ENCODE measurements at regions of chr11 and their contacts with region 1.

Region 1: DNA sequence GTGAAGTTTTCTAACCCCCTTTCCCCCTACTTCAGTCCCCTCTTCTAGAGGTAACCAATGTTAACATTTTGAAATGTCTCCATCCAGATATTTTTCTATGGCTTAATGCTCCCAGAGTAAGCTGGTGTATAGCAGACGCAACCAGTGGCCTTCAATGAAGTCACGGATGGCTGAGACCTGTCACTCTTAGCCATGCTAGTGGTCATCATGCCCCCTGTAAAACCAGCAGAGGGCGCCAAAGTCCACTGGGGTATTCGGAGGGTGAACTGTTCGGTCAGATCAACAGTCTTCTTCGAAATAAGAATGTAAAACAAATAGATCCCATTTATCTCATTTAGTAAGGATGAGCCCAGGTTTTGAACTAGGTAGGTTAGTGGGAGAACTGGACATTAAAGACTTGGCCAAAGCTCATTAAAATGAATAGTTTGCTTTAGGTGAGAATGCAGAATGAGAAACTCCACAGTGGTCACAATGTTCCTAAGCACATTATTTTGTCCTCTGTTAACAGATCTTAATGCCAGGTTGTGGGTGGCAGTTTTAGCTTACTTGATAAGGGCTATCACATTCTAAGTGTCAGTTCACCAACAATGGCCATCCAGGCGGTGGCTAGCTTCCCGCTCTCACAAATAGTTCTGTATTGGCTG is 8.6 kb upstream of the MMP8 start:
- DNase-seq: peak; percentile 89 to 92
- H3K4me3 ChIP-seq: no peak overlapping the region
- H3K4me3 Mint-ChIP-seq: no peak overlapping the region
- H3K27ac Mint-ChIP-seq: no peak overlapping the region
- H3K4me1 ChIP-seq: no peaks in the 10 kb centered on the region
- H3K4me1 Mint-ChIP-seq: no peaks in the 10 kb centered on the region
- H3K27me3 ChIP-seq: no peaks in the 10 kb centered on the region
- H3K27me3 Mint-ChIP-seq: peaks cover 2% of the 10 kb centered on the region
- CTCF ChIP-seq: peak; percentile 99

Region 2: GRCh38 chr11:102716527-102716926 is 16.8 kb before region 1 on chr11:
- CTCF ChIA-PET with region 1: no interaction called
- POLR2A ChIA-PET with region 1: no interaction called
- intact Hi-C with region 1: no loop called
- DNase-seq: no peak
- H3K4me3 ChIP-seq: no peak overlapping the region
- H3K4me3 Mint-ChIP-seq: no peak overlapping the region
- H3K27ac Mint-ChIP-seq: no peak overlapping the region
- H3K4me1 ChIP-seq: no peaks in the 10 kb centered on the region
- H3K4me1 Mint-ChIP-seq: no peaks in the 10 kb centered on the region
- H3K27me3 ChIP-seq: no peaks in the 10 kb centered on the region
- H3K27me3 Mint-ChIP-seq: peaks cover 20% of the 10 kb centered on the region
- CTCF ChIP-seq: no peak

Region 3: GRCh38 chr11:102760355-102761035 is 27.1 kb after region 1 on chr11:
- CTCF ChIA-PET with region 1: no interaction called
- POLR2A ChIA-PET with region 1: interaction called, 5 read pairs
- intact Hi-C with region 1: loop called (anchors 1 kb)
- DNase-seq: peak in 1 of 2 experiments; percentile 33
- H3K4me3 ChIP-seq: no peak overlapping the region
- H3K4me3 Mint-ChIP-seq: no peak overlapping the region
- H3K27ac Mint-ChIP-seq: peak overlapping the region; percentile 15
- H3K4me1 ChIP-seq: peaks cover 63% of the 10 kb centered on the region
- H3K4me1 Mint-ChIP-seq: peaks cover 51% of the 10 kb centered on the region
- H3K27me3 ChIP-seq: no peaks in the 10 kb centered on the region
- H3K27me3 Mint-ChIP-seq: no peaks in the 10 kb centered on the region
- CTCF ChIP-seq: no peak

Region 4: GRCh38 chr11:102810945-102811660 is 77.7 kb after region 1 on chr11:
- CTCF ChIA-PET with region 1: no interaction called
- POLR2A ChIA-PET with region 1: no interaction called
- intact Hi-C with region 1: loop called (anchors 1 kb)
- DNase-seq: peak in 1 of 2 experiments; percentile 49
- H3K4me3 ChIP-seq: no peak overlapping the region
- H3K4me3 Mint-ChIP-seq: no peak overlapping the region
- H3K27ac Mint-ChIP-seq: no peak overlapping the region
- H3K4me1 ChIP-seq: no peaks in the 10 kb centered on the region
- H3K4me1 Mint-ChIP-seq: no peaks in the 10 kb centered on the region
- H3K27me3 ChIP-seq: no peaks in the 10 kb centered on the region
- H3K27me3 Mint-ChIP-seq: no peaks in the 10 kb centered on the region
- CTCF ChIP-seq: peak; percentile 71 to 78

Region 5: DNA sequence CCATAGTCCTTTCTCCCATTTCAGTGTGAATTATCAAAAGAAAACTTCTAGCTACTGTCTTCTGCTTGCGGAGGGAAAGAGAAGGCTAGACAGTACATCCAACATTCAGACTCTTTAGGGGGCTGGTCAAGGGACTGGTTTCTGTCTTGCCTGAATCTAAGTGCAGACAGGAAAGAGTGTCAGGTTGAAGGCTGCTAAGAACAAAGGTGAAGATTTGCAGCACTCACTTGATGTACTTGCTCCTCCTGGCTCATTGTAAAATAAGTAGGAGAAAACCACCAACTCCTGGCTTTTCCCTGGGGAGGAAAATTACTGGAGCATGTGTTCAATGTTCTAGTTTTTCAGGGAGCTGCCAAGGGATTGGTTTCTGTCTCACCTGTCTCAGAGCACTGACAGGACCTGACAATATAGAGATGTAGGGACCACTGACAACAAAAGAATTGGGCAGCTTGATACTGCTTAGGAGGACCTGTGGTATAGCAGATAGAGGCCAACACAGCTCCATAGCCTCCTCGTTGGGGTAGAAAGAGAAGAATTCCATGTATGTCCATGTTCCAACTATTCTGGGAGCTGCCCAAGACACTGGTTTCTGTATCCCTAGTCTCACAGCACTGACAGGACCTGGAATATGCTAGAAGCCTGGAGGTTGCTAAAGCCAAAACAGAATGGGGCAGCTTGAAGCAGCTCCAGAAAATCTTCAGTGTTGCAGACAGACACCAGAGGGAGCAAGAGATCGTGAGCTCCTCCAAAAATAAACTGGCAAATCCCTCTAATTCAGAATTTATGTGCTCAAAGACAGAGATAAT is 181.1 kb after region 1 on chr11:
- CTCF ChIA-PET with region 1: interaction called, 5 read pairs
- POLR2A ChIA-PET with region 1: no interaction called
- intact Hi-C with region 1: loop called (anchors 1 kb)
- DNase-seq: peak in 1 of 2 experiments; percentile 58
- H3K4me3 ChIP-seq: no peak overlapping the region
- H3K4me3 Mint-ChIP-seq: no peak overlapping the region
- H3K27ac Mint-ChIP-seq: no peak overlapping the region
- H3K4me1 ChIP-seq: no peaks in the 10 kb centered on the region
- H3K4me1 Mint-ChIP-seq: no peaks in the 10 kb centered on the region
- H3K27me3 ChIP-seq: no peaks in the 10 kb centered on the region
- H3K27me3 Mint-ChIP-seq: no peaks in the 10 kb centered on the region
- CTCF ChIP-seq: peak; percentile 79 to 88

Region 6: DNA sequence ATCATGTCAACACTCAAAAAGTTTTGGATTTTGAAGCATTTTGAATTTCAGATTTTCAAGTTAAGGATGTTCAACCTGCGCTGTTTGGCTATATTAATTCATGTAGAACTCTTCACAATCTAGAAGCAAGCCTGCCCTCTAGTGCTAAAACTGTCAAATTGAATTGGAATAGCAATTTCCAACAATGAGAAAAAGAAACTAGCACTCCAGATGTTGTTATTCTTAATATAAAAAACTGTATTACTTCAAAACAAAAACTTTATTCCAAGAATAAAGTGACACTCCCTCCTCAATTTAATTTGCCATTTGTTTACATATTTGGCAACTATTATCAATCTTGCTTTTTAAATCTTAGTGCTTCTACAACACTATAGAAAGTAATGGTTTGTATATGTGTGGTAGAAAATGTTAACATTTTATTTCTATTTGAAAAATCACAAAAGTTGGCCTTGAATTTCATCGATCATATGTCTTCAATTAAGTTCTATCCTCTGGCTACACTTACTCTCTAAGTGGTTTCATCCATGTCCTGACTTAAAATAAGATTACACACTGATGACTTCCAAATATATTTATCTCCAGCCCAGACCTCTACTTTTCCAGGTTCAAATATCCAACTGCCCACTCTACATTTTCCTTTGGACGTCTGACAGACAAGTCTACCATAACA is 322.0 kb after region 1 on chr11:
- CTCF ChIA-PET with region 1: no interaction called
- POLR2A ChIA-PET with region 1: no interaction called
- intact Hi-C with region 1: loop called (anchors 2 kb)
- DNase-seq: peak in 1 of 2 experiments; percentile 44
- H3K4me3 ChIP-seq: no peak overlapping the region
- H3K4me3 Mint-ChIP-seq: no peak overlapping the region
- H3K27ac Mint-ChIP-seq: no peak overlapping the region
- H3K4me1 ChIP-seq: no peaks in the 10 kb centered on the region
- H3K4me1 Mint-ChIP-seq: no peaks in the 10 kb centered on the region
- H3K27me3 ChIP-seq: no peaks in the 10 kb centered on the region
- H3K27me3 Mint-ChIP-seq: no peaks in the 10 kb centered on the region
- CTCF ChIP-seq: peak; percentile 80